ENCODE measurements at regions of chr5 and their contacts with region 1.

Region 1: DNA sequence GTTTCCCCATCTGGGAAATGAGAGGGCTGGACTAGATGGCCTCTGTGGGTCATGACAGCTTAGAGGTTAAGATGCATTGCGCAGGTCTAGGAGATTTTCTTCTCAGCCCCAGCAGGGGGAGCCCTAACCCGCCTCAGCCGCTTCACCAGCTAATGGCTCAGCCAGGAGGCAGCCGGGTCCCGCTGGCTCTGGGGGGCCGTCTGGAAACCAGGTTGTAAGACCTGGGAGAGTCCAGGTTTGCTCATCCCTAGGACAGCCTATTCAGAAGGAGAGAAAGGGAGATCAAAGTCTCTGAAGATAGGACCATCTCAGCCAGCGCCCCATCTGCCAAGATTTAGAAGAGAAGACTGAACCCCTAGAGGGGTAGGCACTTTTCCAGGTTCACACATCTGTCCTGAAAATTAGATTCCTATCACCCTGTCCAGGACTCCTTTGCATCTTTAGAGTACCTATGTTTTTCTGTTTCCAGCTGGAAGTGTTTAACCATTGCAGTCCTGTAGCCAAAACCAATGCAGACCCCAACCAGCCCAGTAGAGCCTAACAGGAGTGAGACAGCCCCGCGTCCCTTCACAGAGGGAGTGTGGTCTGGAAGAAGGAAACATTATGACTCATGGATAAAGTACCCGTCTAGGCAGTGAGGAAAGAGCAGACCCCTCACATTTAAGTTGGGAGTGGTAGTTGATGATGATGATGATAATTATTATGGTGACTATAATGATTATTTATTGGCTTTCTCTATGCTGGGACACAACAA is 27.5 kb downstream of the SPARC start:
- ATAC-seq: peak; percentile 63 to 98 (median 94)
- H3K4me3 ChIP-seq: no peak overlapping the region
- H3K27ac ChIP-seq: no peak overlapping the region
- H3K4me1 ChIP-seq: no peaks in the 10 kb centered on the region

Region 2: GRCh38 chr5:151523335-151523734 is 135.8 kb before region 1 on chr5:
- in situ Hi-C with region 1: loop called in 1 of 9 experiments (anchors 10 kb)
- ATAC-seq: peak in 3 of 8 experiments; percentile 78 to 95 (median 90)
- H3K4me3 ChIP-seq: no peak overlapping the region
- H3K27ac ChIP-seq: no peak overlapping the region
- H3K4me1 ChIP-seq: no peaks in the 10 kb centered on the region

Region 3: GRCh38 chr5:151730384-151730783 is 71.2 kb after region 1 on chr5:
- in situ Hi-C with region 1: no loop called
- ATAC-seq: no peak
- H3K4me3 ChIP-seq: no peak overlapping the region
- H3K27ac ChIP-seq: no peak overlapping the region
- H3K4me1 ChIP-seq: peaks cover 0 to 8% of the 10 kb centered on the region in 2 donors

Region 4: DNA sequence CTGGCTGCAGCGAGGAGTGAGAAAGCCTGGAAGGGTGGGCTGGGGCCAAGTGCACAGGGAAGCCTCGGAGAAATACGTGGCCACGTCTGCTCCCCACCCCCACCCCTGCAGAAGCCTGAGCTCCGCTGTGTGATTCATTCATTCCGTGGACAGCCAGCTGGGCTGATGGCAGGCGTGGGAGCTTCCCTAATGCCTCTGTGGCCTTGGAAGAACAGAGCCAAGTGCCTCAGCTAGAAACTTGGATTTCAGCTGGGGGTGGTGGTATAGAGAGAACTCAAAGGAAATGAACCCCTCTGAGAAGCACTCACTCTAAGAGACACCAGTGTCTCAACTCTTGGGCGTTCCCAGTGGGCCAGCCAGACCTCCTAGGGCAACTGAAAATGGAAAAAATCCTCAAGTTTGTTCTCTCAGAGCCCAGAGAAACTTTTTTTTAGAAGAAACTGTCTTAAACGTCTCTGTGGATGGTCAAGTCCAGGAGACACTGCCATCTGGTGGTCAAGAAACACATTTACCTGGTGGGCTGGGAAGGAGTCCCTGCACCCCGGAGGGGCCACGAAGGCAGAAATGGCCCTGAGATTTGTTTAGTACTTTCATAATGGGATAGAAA is 81.3 kb after region 1 on chr5:
- in situ Hi-C with region 1: loop called in 3 of 9 experiments (anchors 5 to 10 kb)
- ATAC-seq: peak; percentile 64 to 80 (median 74)
- H3K4me3 ChIP-seq: no peak overlapping the region
- H3K27ac ChIP-seq: no peak overlapping the region
- H3K4me1 ChIP-seq: peaks cover 5 to 8% of the 10 kb centered on the region in 2 donors

Measured in motor neuron (in vitro differentiated cells).